Posterior cingulate gyrus (tissue), 11 donors: ENCODE measurements at regions of chr14 and their contacts with region 1.

Region 1: DNA sequence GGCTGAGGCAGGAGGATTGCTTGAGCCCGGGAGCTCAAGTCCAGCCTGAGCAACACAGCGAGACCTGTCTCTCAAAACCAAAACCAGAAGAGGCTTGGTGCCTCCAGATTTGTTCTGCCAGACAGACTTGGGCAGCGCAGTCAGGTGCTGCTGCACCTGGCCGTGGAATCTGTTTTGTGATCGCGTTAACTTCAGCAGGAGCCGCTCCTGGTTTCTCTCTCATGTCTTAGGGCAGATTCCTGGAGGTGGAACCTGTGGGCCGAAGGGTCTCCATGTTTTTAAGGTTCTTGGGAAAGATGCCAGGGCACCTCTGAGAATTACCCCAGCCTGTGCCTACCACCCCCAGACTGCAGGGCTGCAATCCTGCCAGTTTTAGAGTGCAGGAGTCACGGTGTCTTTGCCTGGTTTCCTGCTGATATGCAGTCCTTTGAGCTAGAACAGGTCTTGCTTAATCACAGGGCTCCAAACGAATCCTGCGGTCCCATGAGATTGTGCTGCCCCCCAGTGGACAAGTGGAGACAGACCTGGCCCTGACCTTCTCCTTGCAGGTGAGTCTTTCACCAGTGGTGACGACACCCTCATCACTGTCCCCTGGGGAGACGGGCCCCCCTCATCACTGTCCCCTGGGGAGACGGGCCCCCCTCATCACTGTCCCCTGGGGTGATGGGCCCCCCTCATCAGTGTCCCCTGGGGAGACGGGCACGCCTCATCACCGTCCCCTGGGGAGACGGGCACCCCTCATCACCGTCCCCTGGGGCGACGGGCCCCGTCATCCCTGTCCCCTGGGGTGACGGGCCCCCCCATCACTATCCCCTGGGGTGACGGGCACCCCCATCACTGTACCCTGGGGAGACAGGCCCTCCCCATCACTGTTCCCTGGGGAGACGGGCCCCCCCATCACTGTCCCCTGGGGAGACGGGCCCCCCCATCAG is 37.6 kb downstream of the PACS2 start:
- DNase-seq: peak; percentile 74 to 97 (median 86)

Region 2: GRCh38 chr14:105090493-105091053 is 261.6 kb before region 1 on chr14:
- intact Hi-C with region 1: loop called (anchors 2 kb)
- DNase-seq: peak; percentile 64 to 97 (median 82)

Region 3: GRCh38 chr14:105203057-105203531 is 149.1 kb before region 1 on chr14:
- intact Hi-C with region 1: loop called (anchors 2 kb)
- DNase-seq: peak; percentile 61 to 97 (median 82)

Region 4: GRCh38 chr14:105314287-105315200 is 37.6 kb before region 1 on chr14 and contains the start of gene PACS2:
- intact Hi-C with region 1: loop called (anchors 5 kb)
- DNase-seq: peak in 7 of 10 donors; percentile 45 to 95 (median 58)